ENCODE measurements at regions of chr1 and their contacts with region 1.

Region 1: GRCh38 chr1:193083365-193084088 is 21.7 kb downstream of the GLRX2 start:
- DNase-seq: no peak
- ATAC-seq: no peak
- H3K4me3 ChIP-seq: no peak overlapping the region
- H3K27ac ChIP-seq: no peak overlapping the region
- H3K4me1 ChIP-seq: no peaks in the 10 kb centered on the region
- H3K27me3 ChIP-seq: no peaks in the 10 kb centered on the region
- CTCF ChIP-seq: no peak

Region 2: GRCh38 chr1:192003295-192004077 is 1080.0 kb before region 1 on chr1:
- CTCF ChIA-PET with region 1: interaction called, 13 read pairs
- POLR2A ChIA-PET with region 1: no interaction called
- in situ Hi-C with region 1: no loop called
- intact Hi-C with region 1: no loop called
- DNase-seq: no peak
- ATAC-seq: no peak
- H3K4me3 ChIP-seq: no peak overlapping the region
- H3K27ac ChIP-seq: no peak overlapping the region
- H3K4me1 ChIP-seq: no peaks in the 10 kb centered on the region
- H3K27me3 ChIP-seq: no peaks in the 10 kb centered on the region
- CTCF ChIP-seq: no peak

Region 3: GRCh38 chr1:192846950-192847349 is 236.6 kb before region 1 on chr1:
- CTCF ChIA-PET with region 1: no interaction called
- POLR2A ChIA-PET with region 1: no interaction called
- in situ Hi-C with region 1: no loop called
- intact Hi-C with region 1: no loop called
- DNase-seq: no peak
- ATAC-seq: no peak
- H3K4me3 ChIP-seq: no peak overlapping the region
- H3K27ac ChIP-seq: no peak overlapping the region
- H3K4me1 ChIP-seq: no peaks in the 10 kb centered on the region
- H3K27me3 ChIP-seq: peaks cover 2% of the 10 kb centered on the region
- CTCF ChIP-seq: no peak